B cell (primary cell): ENCODE measurements at regions of chr21 and their contacts with region 1.

Region 1: GRCh38 chr21:44792702-44793591 is 8.7 kb downstream of the UBE2G2 start:
- DNase-seq: peak; percentile 72
- ATAC-seq: peak; percentile 78
- H3K4me3 ChIP-seq: no peak overlapping the region
- H3K4me3 Mint-ChIP-seq: no peak overlapping the region
- H3K27ac ChIP-seq: no peak overlapping the region
- H3K27ac Mint-ChIP-seq: no peak overlapping the region
- H3K4me1 ChIP-seq: peaks cover 22 to 32% of the 10 kb centered on the region in 2 donors
- H3K4me1 Mint-ChIP-seq: peaks cover 37% of the 10 kb centered on the region
- H3K27me3 ChIP-seq: no peaks in the 10 kb centered on the region
- H3K27me3 Mint-ChIP-seq: no peaks in the 10 kb centered on the region
- CTCF ChIP-seq: peak; percentile 88

Region 2: DNA sequence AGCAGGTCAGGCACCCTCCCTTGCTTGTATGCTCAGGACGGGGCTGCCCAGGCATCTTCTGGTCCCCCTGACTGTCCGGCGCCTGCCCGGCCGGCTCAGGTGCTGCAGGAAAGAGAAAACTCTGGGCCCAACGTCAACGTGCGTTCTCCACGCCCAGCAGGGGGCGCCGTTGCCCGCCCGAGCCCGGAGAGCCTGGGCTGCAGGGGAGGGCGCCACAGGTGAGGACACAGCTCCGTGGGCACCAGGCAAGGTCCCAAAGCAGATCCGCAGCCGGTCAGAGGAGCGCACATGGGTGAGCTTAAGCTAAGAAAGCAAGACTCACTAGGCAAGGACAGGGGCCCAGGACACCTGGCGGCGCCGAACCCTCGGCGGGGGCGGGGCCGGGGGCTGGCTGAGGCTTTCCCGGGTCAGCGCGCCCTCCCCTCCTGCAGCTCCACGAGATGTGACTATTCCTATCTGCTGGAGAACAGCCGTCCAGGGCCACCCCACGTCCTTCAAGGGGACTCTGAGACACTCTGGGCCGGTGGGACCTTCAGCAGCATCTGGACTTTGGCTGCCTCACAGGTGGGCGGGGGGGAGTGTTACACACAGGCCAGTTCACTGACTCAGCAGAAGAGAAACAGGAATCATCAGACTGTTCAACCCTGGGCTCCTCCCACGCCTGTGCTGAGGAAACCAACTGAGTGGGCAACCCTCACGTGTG is 282.3 kb before region 1 on chr21:
- CTCF ChIA-PET with region 1: interaction called, 37 read pairs
- POLR2A ChIA-PET with region 1: no interaction called
- intact Hi-C with region 1: loop called (anchors 1 kb)
- DNase-seq: peak; percentile 77
- ATAC-seq: peak; percentile 79
- H3K4me3 ChIP-seq: peak overlapping the region in 3 of 5 experiments; percentile 11 to 35 (median 35)
- H3K4me3 Mint-ChIP-seq: peak overlapping the region; percentile 19
- H3K27ac ChIP-seq: no peak overlapping the region
- H3K27ac Mint-ChIP-seq: no peak overlapping the region
- H3K4me1 ChIP-seq: peaks cover 9 to 11% of the 10 kb centered on the region in 2 donors
- H3K4me1 Mint-ChIP-seq: peaks cover 7% of the 10 kb centered on the region
- H3K27me3 ChIP-seq: peaks cover 0 to 9% (median 4%) of the 10 kb centered on the region in 4 experiments
- H3K27me3 Mint-ChIP-seq: peaks cover 10% of the 10 kb centered on the region
- CTCF ChIP-seq: peak; percentile 85

Region 3: DNA sequence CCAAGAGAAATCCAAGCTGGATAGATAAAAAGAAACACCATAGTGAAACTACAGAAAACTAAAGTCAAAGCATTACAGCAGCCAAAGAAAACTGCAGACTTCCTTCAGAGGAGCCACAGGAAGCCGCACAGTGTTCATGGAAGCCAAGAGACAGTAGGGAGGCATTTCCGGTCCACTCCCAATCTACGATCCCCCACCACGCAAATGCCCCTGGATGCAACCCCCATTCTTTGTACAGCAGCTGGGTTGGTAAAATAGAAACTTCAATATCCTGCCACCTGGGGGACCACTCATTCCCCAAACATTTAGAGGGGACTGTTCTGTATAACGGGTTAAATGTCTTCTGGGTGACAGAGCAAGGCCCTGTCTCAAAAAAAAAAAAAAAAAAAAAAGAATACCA is 37.7 kb before region 1 on chr21:
- CTCF ChIA-PET with region 1: interaction called, 14 read pairs
- POLR2A ChIA-PET with region 1: no interaction called
- intact Hi-C with region 1: loop called (anchors 1 kb)
- DNase-seq: no peak
- ATAC-seq: no peak
- H3K4me3 ChIP-seq: no peak overlapping the region
- H3K4me3 Mint-ChIP-seq: no peak overlapping the region
- H3K27ac ChIP-seq: no peak overlapping the region
- H3K27ac Mint-ChIP-seq: no peak overlapping the region
- H3K4me1 ChIP-seq: no peaks in the 10 kb centered on the region
- H3K4me1 Mint-ChIP-seq: no peaks in the 10 kb centered on the region
- H3K27me3 ChIP-seq: peaks cover 0 to 2% (median 0%) of the 10 kb centered on the region in 4 experiments
- H3K27me3 Mint-ChIP-seq: peaks cover 14% of the 10 kb centered on the region
- CTCF ChIP-seq: peak; percentile 38

Region 4: GRCh38 chr21:44836666-44837471 is 43.9 kb after region 1 on chr21:
- CTCF ChIA-PET with region 1: no interaction called
- POLR2A ChIA-PET with region 1: no interaction called
- intact Hi-C with region 1: no loop called
- DNase-seq: no peak
- ATAC-seq: no peak
- H3K4me3 ChIP-seq: no peak overlapping the region
- H3K4me3 Mint-ChIP-seq: no peak overlapping the region
- H3K27ac ChIP-seq: no peak overlapping the region
- H3K27ac Mint-ChIP-seq: no peak overlapping the region
- H3K4me1 ChIP-seq: peaks cover 0 to 3% of the 10 kb centered on the region in 2 donors
- H3K4me1 Mint-ChIP-seq: no peaks in the 10 kb centered on the region
- H3K27me3 ChIP-seq: peaks cover 0 to 12% (median 0%) of the 10 kb centered on the region in 4 experiments
- H3K27me3 Mint-ChIP-seq: peaks cover 20% of the 10 kb centered on the region
- CTCF ChIP-seq: no peak

Region 5: GRCh38 chr21:45041351-45041805 is 248.4 kb after region 1 on chr21:
- CTCF ChIA-PET with region 1: no interaction called
- POLR2A ChIA-PET with region 1: no interaction called
- intact Hi-C with region 1: no loop called
- DNase-seq: no peak
- ATAC-seq: no peak
- H3K4me3 ChIP-seq: no peak overlapping the region
- H3K4me3 Mint-ChIP-seq: no peak overlapping the region
- H3K27ac ChIP-seq: no peak overlapping the region
- H3K27ac Mint-ChIP-seq: no peak overlapping the region
- H3K4me1 ChIP-seq: no peaks in the 10 kb centered on the region
- H3K4me1 Mint-ChIP-seq: peaks cover 4% of the 10 kb centered on the region
- H3K27me3 ChIP-seq: peaks cover 0 to 13% (median 2%) of the 10 kb centered on the region in 4 experiments
- H3K27me3 Mint-ChIP-seq: peaks cover 24% of the 10 kb centered on the region
- CTCF ChIP-seq: no peak